ENCODE measurements at regions of chr3 and their contacts with region 1.

Region 1: DNA sequence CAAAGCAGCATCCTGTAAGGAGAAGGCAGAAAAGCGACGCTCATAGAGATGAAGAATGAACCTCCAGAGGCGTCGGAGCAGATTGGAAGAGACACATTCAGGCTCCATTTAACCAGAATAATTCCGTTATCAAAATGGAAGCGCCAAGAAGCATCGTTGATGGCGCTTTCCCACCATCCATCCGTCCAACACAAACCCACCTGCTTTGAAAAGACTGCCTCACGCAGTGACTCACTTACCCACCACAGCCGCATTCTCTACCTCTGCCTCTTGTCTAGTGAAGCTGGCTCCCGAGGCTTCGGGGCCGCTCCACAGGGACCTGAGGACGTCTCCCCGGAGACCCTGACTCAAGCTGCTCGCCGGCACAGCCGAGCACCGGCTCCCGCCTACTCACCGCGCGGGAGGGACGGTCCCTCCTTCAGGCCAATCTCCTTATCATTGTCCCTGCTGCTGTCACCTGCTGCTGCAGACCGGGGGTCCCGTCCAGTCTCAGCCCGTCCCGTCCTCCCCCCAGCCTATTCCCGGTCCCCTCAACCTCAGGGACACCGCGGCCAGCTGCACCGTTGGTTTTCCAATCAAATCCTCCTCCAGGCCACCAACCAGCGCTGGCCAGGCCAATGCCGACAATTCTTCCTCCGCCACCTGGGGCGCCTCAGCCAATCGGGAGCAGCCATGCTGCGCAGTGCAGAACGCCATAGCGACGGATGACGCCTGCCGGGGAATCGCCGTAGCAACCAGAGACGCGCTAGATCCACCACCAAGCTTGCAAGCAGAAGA is at the start of gene NEK10:
- DNase-seq: peak; percentile 84 to 98
- H3K4me3 ChIP-seq: peak within 1 kb of the TSS; percentile 79 to 89 (median 81)
- H3K27ac ChIP-seq: no peak within 1 kb of the TSS
- H3K4me1 ChIP-seq: peaks cover 0 to 3% (median 1%) of the 10 kb centered on the region in 4 experiments; a peak in 3 of 7 replicates
- H3K27me3 ChIP-seq: no peaks in the 10 kb centered on the region; a peak in 1 of 7 replicates
- CTCF ChIP-seq: no peak
- EP300 ChIP-seq: no peak
- POLR2A ChIP-seq: no peak
- RAD21 ChIP-seq: no peak
- total RNA-seq, gene NEK10: 0.50 and 0.84 TPM in 2 replicates

Region 2: DNA sequence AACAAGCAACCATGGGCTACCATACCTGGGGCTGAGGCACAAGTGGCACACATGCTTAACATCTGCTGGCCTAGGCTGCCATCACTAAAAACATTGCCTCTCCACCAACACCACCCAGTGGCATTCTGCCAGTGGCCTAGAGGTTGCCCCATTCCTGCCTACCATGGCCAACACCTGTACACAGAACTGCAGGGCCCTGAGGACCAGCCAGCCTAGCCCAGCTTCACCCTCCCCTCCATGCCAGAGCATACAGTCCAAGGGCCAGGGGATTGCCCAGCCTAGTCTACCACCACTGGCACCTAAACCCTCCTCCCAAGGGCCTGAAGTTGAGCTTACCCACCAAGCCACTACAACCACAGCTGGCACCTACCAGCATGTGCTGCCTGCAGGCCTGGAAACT is 35.2 kb before region 1 on chr3:
- CTCF ChIA-PET with region 1: no interaction called
- POLR2A ChIA-PET with region 1: no interaction called
- DNase-seq: no peak
- H3K4me3 ChIP-seq: no peak overlapping the region
- H3K27ac ChIP-seq: no peak overlapping the region
- H3K4me1 ChIP-seq: no peaks in the 10 kb centered on the region
- H3K27me3 ChIP-seq: no peaks in the 10 kb centered on the region
- CTCF ChIP-seq: no peak
- EP300 ChIP-seq: no peak
- POLR2A ChIP-seq: no peak
- RAD21 ChIP-seq: no peak

Region 3: GRCh38 chr3:27357665-27358258 is 11.3 kb before region 1 on chr3:
- CTCF ChIA-PET with region 1: interaction called, 18 read pairs
- POLR2A ChIA-PET with region 1: interaction called, 6 read pairs
- DNase-seq: peak; percentile 25 to 55
- H3K4me3 ChIP-seq: no peak overlapping the region
- H3K27ac ChIP-seq: no peak overlapping the region
- H3K4me1 ChIP-seq: peaks cover 0 to 12% (median 6%) of the 10 kb centered on the region in 4 experiments; a peak in 5 of 7 replicates
- H3K27me3 ChIP-seq: peaks cover 0 to 1% (median 0%) of the 10 kb centered on the region in 4 experiments; a peak in 1 of 7 replicates
- CTCF ChIP-seq: peak; percentile 66 to 77 (median 68)
- EP300 ChIP-seq: no peak
- POLR2A ChIP-seq: no peak
- RAD21 ChIP-seq: peak; percentile 69 to 75

Region 4: DNA sequence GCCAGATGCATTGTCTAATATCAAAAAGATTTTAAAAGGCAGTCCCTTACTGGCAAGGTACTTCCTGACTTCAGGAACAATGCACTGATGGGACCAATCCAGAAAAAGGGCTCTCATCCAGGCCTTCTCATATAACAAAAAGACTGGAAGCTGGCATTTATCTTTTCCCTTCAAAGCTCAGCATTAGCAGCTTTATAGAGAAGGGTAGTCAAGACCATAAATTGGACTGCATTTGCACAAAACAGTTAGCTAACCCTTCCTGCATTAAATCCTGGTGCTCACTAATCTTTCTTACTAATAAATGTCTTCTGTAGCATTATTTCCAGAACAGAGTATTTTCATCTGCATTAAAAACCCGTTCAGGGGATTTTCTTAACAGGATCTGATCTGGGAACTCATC is 46.2 kb after region 1 on chr3:
- CTCF ChIA-PET with region 1: no interaction called
- POLR2A ChIA-PET with region 1: no interaction called
- DNase-seq: no peak
- H3K4me3 ChIP-seq: no peak overlapping the region
- H3K27ac ChIP-seq: no peak overlapping the region
- H3K4me1 ChIP-seq: no peaks in the 10 kb centered on the region
- H3K27me3 ChIP-seq: no peaks in the 10 kb centered on the region
- CTCF ChIP-seq: no peak
- EP300 ChIP-seq: no peak
- POLR2A ChIP-seq: no peak
- RAD21 ChIP-seq: no peak